ENCODE measurements at regions of chr3 and their contacts with region 1.

Region 1: GRCh38 chr3:38992117-38992760 is 59.5 kb downstream of the SCN11A start:
- DNase-seq: no peak
- H3K4me3 Mint-ChIP-seq: no peak overlapping the region
- H3K27ac Mint-ChIP-seq: no peak overlapping the region
- H3K4me1 Mint-ChIP-seq: no peaks in the 10 kb centered on the region
- H3K27me3 Mint-ChIP-seq: peaks cover 7% of the 10 kb centered on the region

Region 2: GRCh38 chr3:38651154-38651789 is 341.0 kb before region 1 on chr3:
- intact Hi-C with region 1: loop called (anchors 10 kb)
- DNase-seq: peak; percentile 55
- H3K4me3 Mint-ChIP-seq: no peak overlapping the region
- H3K27ac Mint-ChIP-seq: no peak overlapping the region
- H3K4me1 Mint-ChIP-seq: peaks cover 12% of the 10 kb centered on the region
- H3K27me3 Mint-ChIP-seq: peaks cover 17% of the 10 kb centered on the region

Region 3: DNA sequence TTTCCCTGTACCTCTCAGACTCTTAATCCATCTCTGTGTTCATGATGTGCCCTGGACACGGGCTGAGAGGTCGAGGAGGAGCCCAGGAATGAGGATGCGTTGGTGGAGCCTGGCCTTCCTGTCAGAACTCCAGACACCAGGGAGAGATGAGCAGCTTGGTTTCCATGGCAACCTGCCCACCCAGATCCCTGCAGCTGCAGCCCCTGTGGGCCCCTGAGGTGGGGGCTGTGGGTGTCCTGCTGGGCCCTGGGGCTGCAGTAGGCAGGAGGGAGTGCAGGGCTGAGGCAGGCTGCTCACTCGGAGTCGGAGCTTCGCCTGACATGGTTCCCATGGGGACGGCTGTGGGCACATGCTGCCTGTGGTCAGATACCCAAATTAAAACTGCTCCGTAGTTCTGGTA is 168.5 kb before region 1 on chr3:
- intact Hi-C with region 1: no loop called
- DNase-seq: no peak
- H3K4me3 Mint-ChIP-seq: no peak overlapping the region
- H3K27ac Mint-ChIP-seq: no peak overlapping the region
- H3K4me1 Mint-ChIP-seq: no peaks in the 10 kb centered on the region
- H3K27me3 Mint-ChIP-seq: peaks cover 9% of the 10 kb centered on the region

Region 4: GRCh38 chr3:39327746-39328349 is 335.6 kb after region 1 on chr3:
- intact Hi-C with region 1: no loop called
- DNase-seq: peak; percentile 28
- H3K4me3 Mint-ChIP-seq: peak overlapping the region; percentile 39
- H3K27ac Mint-ChIP-seq: peak overlapping the region; percentile 75
- H3K4me1 Mint-ChIP-seq: peaks cover 74% of the 10 kb centered on the region
- H3K27me3 Mint-ChIP-seq: no peaks in the 10 kb centered on the region

Region 5: GRCh38 chr3:40780291-40780924 is 1788.2 kb after region 1 on chr3:
- intact Hi-C with region 1: no loop called
- DNase-seq: no peak
- H3K4me3 Mint-ChIP-seq: no peak overlapping the region
- H3K27ac Mint-ChIP-seq: no peak overlapping the region
- H3K4me1 Mint-ChIP-seq: no peaks in the 10 kb centered on the region
- H3K27me3 Mint-ChIP-seq: peaks cover 5% of the 10 kb centered on the region